ENCODE measurements at regions of chr11 and their contacts with region 1.

Region 1: GRCh38 chr11:102317099-102317767 is at the start of gene BIRC3:
- DNase-seq: peak; percentile 72 to 97
- ATAC-seq: peak; percentile 91 to 94
- H3K4me3 ChIP-seq: peak within 1 kb of the TSS; percentile 52
- H3K27ac ChIP-seq: peak within 1 kb of the TSS; percentile 80 to 91
- H3K4me1 ChIP-seq: peaks cover 68% of the 10 kb centered on the region
- CTCF ChIP-seq: 0 out of 3 replicates have a peak, but pooled peaks have one; percentile 3
- EP300 ChIP-seq: peak in 1 of 2 experiments; percentile 65; a peak in 1 of 5 replicates
- POLR2A ChIP-seq: peak; percentile 59
- RAD21 ChIP-seq: no peak
- polyA plus RNA-seq, gene BIRC3: 13.8 and 17.5 TPM in 2 replicates

Region 2: GRCh38 chr11:102287964-102288724 is 29.1 kb before region 1 on chr11:
- CTCF ChIA-PET with region 1: interaction called, 15 read pairs
- POLR2A ChIA-PET with region 1: interaction called, 3 read pairs
- DNase-seq: peak; percentile 66 to 80
- ATAC-seq: peak; percentile 89 to 95
- H3K4me3 ChIP-seq: no peak overlapping the region; the same call in 2 of the 3 replicates
- H3K27ac ChIP-seq: peak overlapping the region; percentile 57 to 72; a peak in 5 of 6 replicates
- H3K4me1 ChIP-seq: peaks cover 28% of the 10 kb centered on the region; the same call in 2 of the 3 replicates
- CTCF ChIP-seq: peak; percentile 70
- EP300 ChIP-seq: no peak
- POLR2A ChIP-seq: no peak
- RAD21 ChIP-seq: peak; percentile 76 to 83

Region 3: DNA sequence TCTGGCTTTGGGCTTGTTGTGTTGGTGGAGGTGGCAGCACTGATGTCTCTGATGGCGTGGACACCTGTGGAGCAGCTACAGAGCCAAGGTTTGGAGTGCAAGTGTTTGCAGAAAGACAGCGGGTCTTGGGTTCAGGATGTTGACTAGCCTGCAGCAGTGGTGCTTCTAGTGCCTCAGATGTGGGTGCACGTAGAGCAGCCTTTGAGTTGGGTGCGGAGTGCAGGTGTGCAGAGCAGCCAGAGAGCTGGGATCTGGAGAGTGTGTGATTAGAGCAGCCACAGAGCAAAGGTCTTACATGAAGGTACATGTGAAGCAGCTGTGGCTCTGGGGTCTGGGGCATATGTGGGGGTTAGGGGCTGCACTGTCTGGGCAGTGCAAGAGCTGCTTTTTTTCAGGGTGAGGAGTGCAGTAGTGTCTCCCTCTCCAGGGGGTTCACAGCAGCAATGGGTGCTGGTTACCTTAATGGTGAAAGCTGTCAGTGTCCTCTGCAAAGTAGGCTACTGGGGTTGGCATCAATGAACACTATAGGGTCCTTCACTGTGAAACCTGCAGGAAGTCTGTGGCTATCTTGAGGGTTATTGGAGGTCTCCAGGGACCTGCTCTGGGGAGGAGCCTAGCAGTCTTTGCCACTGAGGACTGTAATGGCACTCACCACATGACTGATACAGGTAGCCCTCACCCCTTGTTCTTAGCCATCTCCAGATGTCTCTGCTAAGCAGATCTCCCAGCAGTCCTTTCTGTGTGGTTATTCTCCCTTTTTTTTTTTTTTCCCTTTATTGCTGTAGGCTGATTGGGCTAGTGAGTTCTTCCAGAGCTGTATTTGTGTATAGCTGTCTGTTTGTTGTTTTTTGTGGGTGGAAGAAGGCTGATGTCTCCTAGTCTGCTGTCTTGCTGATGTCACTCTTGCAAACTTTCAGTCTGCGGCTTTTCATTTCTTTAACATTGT is 44.1 kb after region 1 on chr11:
- CTCF ChIA-PET with region 1: no interaction called
- POLR2A ChIA-PET with region 1: no interaction called
- DNase-seq: no peak
- ATAC-seq: no peak; a peak in 1 of 6 replicates
- H3K4me3 ChIP-seq: no peak overlapping the region
- H3K27ac ChIP-seq: no peak overlapping the region
- H3K4me1 ChIP-seq: no peaks in the 10 kb centered on the region
- CTCF ChIP-seq: no peak
- EP300 ChIP-seq: no peak
- POLR2A ChIP-seq: no peak
- RAD21 ChIP-seq: no peak